HAP-1 (cell line): ENCODE measurements at regions of chr3 and their contacts with region 1.

Region 1: DNA sequence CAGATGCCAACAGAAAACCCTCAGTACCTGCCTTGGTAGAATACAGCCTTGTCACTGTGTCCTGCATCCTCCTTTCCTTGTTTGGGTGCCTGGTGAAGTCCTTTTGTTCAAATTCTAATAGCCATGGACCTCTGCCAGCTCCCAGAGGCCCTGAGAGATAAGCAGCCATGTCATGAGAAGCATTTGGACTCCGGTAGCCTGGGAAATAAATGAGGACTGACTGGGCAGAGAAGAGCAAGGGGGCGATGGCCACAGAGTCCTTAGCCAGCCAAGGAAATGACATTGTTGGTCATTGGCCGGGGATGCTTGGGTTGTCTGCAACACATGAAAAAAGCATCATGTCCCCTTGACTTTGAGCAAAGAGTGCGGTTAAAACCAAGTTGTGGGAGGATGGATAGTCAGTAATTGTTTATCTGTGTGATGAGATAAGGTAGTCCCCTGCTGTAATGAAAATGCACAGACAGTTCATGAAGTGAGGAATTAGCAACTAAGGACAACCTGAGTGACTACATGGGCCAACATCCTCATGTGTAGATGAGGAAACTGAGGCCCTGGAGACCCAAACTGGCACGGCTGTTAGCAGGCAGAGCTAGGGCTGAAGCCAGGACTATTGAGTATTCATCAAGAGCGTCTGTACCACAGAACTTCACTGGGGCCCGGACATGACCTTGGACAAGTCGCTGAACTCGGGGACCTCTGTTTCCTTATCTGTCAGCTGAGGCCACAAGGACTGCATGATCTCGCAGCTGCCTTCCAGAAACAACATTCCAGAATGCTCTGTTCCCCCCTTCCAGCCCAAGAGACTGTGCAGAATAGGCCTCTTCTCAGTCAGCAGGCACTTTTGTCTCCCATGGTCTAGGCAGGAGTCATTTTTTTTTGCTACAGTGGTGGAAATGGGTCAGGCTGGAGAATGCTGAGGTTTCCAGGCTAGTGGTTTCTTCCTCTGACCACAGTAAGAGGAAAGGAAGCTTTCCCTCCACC is 90.5 kb upstream of the CTDSPL start:
- DNase-seq: no peak
- H3K4me3 ChIP-seq: no peak overlapping the region
- H3K4me1 ChIP-seq: no peaks in the 10 kb centered on the region; the same call in 1 of the 2 replicates
- H3K27me3 ChIP-seq: no peaks in the 10 kb centered on the region

Region 2: GRCh38 chr3:37456270-37456708 is 314.9 kb before region 1 on chr3:
- in situ Hi-C with region 1: loop called (anchors 5 kb)
- DNase-seq: no peak
- H3K4me3 ChIP-seq: no peak overlapping the region
- H3K4me1 ChIP-seq: peaks cover 3% of the 10 kb centered on the region; the same call in 1 of the 2 replicates
- H3K27me3 ChIP-seq: no peaks in the 10 kb centered on the region

Region 3: DNA sequence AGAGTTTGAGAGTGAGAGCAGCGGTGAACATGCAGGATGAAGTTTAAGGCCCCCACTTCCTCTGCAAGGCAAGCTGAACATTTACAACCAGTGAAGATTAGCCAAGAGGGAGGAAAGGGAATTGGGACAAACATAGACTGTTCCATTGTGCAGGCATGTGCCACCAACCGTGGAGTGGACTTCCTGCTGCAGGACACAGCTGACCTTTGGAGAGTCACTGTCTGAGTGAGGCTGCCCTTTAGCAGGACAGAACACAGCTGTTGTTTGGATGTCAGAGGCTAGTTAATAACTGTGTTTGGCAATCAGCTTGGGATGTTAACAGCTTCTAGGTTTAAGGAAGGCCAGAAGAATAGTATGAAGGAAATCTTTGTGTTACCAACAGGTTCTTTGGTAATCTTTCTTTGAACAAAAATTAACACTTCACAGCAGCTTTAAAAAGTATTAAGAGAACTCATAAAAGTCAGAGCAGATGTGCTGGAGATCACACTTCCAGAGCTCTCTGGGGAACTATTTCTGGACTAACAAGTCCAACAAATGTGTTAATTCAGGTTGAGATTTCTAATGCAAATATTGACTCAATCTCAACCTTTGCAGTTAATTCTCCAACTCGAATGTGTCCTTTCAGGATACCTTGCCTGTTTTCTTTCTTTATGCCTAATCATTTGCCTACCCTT is 121.8 kb after region 1 on chr3:
- in situ Hi-C with region 1: no loop called
- DNase-seq: no peak
- H3K4me3 ChIP-seq: no peak overlapping the region
- H3K4me1 ChIP-seq: peaks cover 2% of the 10 kb centered on the region; the same call in 1 of the 2 replicates
- H3K27me3 ChIP-seq: no peaks in the 10 kb centered on the region

Region 4: GRCh38 chr3:39361252-39361927 is 1590.2 kb after region 1 on chr3:
- in situ Hi-C with region 1: no loop called
- DNase-seq: no peak
- H3K4me3 ChIP-seq: no peak overlapping the region
- H3K4me1 ChIP-seq: no peaks in the 10 kb centered on the region
- H3K27me3 ChIP-seq: no peaks in the 10 kb centered on the region